Dorsolateral prefrontal cortex (tissue), 120 donors: ENCODE measurements at regions of chr22 and their contacts with region 1.

Region 1: GRCh38 chr22:20654343-20655208 is 119.3 kb upstream of the SERPIND1 start:
- DNase-seq: no peak
- H3K4me3 ChIP-seq: no peak overlapping the region
- H3K27ac ChIP-seq: no peak overlapping the region
- H3K27me3 ChIP-seq: no peaks in the 10 kb centered on the region
- CTCF ChIP-seq: no peak

Region 2: GRCh38 chr22:20606041-20606783 is 48.4 kb before region 1 on chr22:
- intact Hi-C with region 1: loop called in 1 of 2 experiments (anchors 2 kb)
- DNase-seq: no peak
- H3K4me3 ChIP-seq: no peak overlapping the region
- H3K27ac ChIP-seq: no peak overlapping the region
- H3K27me3 ChIP-seq: peaks cover 0 to 4% (median 0%) of the 10 kb centered on the region in 45 donors
- CTCF ChIP-seq: peak in 54 of 56 donors; percentile 21 to 64 (median 48)

Region 3: DNA sequence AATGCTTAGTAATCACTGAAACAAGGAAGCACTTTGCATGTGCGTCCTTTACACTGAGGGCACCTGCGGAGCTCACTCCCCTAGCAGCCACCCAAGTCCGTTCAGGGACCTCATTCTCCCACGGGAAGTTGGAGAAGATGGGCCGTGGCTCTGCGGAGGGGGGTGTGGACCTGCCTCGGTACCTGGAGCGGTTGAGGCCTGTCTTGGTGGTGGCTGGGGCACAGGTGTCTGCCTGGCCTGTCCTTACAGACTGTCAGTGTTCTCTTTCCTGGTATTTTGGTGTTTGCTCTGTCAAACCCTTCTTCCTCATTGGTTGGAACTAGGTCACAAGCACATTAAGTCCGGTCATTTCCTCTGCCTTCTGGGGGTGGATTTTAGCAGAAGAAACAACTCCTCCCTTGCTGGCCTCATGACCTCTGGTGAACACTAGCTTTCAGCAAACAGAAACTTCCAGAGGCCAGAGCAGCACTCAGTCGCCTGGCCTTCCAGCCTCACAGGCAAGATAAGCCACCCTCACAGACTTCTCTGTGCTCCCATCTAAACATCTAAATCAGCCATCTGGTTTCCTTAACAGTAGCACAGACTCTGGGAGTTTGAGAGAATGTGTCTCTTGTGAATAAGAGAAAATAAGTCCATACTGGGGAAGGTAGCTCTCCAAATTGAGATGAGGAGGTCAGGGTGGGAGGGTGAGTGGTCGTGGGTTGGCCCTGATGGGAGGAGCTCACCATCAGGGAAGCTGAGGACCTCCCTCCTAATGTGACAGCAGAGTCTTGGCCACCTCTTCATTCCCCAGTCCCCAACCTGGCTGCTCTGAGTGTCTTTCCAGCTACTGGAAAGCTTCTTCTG is 212.8 kb after region 1 on chr22:
- intact Hi-C with region 1: no loop called
- DNase-seq: no peak
- H3K4me3 ChIP-seq: peak overlapping the region in 2 of 59 donors; percentile 25 to 37
- H3K27ac ChIP-seq: peak overlapping the region; percentile 15 to 95 (median 80)
- H3K27me3 ChIP-seq: no peaks in the 10 kb centered on the region
- CTCF ChIP-seq: no peak